Mammary epithelial cell (primary cell): ENCODE measurements at regions of chr4 and their contacts with region 1.

Region 1: DNA sequence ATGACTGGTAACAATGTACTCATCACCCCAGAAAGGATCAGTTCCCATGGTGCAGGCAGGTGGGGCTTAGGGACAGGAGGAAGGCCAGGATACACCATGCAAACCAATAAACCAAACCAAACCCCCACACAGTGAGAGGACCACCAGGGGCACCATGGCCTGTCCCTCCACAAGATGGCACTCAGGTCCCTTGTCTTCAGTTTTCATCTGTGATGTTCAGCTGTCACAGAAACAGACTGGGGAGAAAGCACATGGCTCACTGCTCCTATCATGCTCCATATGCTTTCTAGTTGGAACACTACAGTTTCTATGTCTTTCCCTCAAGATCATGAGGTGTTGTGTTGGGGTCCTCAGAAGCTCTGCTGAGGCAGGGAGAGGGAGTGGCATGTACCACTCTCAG is 10.1 kb downstream of the HS3ST1 start:
- DNase-seq: no peak
- H3K4me3 ChIP-seq: no peak overlapping the region
- H3K27ac ChIP-seq: no peak overlapping the region
- H3K4me1 ChIP-seq: peaks cover 22% of the 10 kb centered on the region
- H3K27me3 ChIP-seq: no peaks in the 10 kb centered on the region
- CTCF ChIP-seq: no peak

Region 2: DNA sequence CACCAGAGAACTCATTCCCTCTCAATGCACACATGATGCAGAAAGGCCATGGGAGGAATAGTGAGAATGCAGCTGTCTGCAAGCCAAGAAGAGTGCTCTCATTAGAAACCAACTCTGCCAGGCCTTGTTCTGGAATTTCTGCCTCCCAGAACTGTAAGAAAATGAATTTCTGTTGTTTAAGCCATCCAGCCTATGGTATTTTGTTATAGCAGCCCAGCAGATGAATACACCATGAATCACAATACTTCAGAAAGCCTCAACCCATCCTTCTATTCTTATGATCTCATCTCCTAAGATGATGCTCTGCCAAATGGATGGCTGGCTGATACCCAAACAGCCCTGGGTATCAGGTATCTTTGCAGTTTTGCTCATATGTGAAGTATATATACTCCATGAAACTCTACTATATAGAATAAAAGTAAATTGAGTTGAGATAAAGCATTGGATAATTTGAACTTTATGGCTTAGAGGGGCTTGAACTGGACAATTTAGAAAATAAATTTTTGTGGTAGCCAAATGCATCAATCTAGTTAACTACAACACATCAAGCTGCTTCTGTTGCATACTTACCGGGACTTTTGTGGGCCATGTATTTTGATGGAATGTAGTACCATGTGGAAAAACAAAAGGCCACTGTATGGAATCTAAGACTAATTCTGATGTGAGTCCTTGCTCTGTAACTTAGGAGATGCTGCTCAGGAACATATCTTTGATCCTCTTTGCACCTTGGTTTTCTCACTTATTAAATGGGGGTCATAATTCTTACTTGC is 235.8 kb before region 1 on chr4:
- CTCF ChIA-PET with region 1: no interaction called
- dilution Hi-C with region 1: no loop called
- in situ Hi-C with region 1: no loop called
- intact Hi-C with region 1: no loop called
- DNase-seq: peak; percentile 48
- H3K4me3 ChIP-seq: no peak overlapping the region
- H3K27ac ChIP-seq: no peak overlapping the region
- H3K4me1 ChIP-seq: no peaks in the 10 kb centered on the region
- H3K27me3 ChIP-seq: no peaks in the 10 kb centered on the region
- CTCF ChIP-seq: no peak

Region 3: DNA sequence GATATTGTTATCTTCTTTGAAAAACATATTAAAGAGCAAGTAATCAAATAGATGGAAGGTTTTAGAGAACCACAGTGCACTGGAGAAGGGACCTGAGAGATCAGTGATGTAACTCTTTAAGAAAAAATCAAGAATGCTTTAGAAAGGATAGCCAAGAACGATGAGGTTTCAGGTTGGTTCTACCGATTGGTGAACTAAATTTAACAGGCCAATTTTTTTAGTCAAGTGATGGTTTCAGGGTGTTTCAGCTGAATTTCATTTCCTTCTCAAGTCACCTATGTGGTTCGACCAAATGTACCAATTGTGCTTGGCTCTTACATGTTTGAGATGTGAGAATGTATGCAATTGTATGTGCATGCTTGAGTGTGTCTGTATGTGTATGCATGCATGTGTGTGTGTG is 16.4 kb before region 1 on chr4:
- CTCF ChIA-PET with region 1: interaction called, 13 read pairs
- dilution Hi-C with region 1: no loop called
- in situ Hi-C with region 1: no loop called
- intact Hi-C with region 1: no loop called
- DNase-seq: no peak
- H3K4me3 ChIP-seq: no peak overlapping the region
- H3K27ac ChIP-seq: no peak overlapping the region
- H3K4me1 ChIP-seq: peaks cover 26% of the 10 kb centered on the region
- H3K27me3 ChIP-seq: no peaks in the 10 kb centered on the region
- CTCF ChIP-seq: no peak